Mammary epithelial cell (primary cell): ENCODE measurements at regions of chr2 and their contacts with region 1.

Region 1: GRCh38 chr2:9333591-9334171 is 89.6 kb downstream of the ITGB1BP1 start:
- DNase-seq: peak; percentile 71
- H3K4me3 ChIP-seq: no peak overlapping the region
- H3K27ac ChIP-seq: no peak overlapping the region
- H3K4me1 ChIP-seq: peaks cover 13% of the 10 kb centered on the region
- H3K27me3 ChIP-seq: no peaks in the 10 kb centered on the region
- CTCF ChIP-seq: peak; percentile 75 to 85

Region 2: DNA sequence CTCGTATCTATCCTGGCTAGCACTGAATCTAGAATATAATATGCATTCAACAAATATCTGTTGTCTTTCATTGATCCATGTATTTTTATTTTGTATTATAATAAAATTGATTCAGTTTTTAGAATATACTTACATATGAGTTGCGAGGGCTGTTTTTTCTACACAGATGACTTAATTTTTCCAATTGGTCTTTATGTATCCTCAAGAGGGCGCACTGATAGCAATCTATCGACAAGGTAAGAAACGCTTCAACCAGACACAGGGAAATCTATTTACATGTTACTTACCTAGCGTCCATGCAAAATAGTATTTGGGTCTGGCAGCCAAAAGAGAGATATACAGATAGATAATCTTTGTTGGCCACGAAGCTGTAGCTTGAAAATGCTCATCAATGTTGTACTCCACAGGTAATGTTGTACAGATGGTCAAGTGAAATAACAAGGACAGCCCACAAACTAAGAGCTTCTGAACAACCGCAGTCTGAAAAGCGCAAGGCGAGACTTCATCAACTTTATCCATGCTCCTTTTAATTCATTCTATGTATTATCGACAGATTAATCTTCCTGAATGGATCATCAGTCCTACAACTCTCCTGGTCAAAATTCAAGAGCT is 460.8 kb before region 1 on chr2:
- CTCF ChIA-PET with region 1: no interaction called
- dilution Hi-C with region 1: no loop called
- in situ Hi-C with region 1: loop called in 1 of 2 experiments (anchors 25 kb)
- intact Hi-C with region 1: loop called (anchors 5 kb)
- DNase-seq: peak; percentile 37
- H3K4me3 ChIP-seq: no peak overlapping the region
- H3K27ac ChIP-seq: no peak overlapping the region
- H3K4me1 ChIP-seq: no peaks in the 10 kb centered on the region
- H3K27me3 ChIP-seq: no peaks in the 10 kb centered on the region
- CTCF ChIP-seq: peak; percentile 44 to 65

Region 3: GRCh38 chr2:9310377-9310776 is 23.3 kb before region 1 on chr2:
- CTCF ChIA-PET with region 1: interaction called, 37 read pairs
- dilution Hi-C with region 1: no loop called
- in situ Hi-C with region 1: no loop called
- intact Hi-C with region 1: no loop called
- DNase-seq: peak; percentile 93
- H3K4me3 ChIP-seq: no peak overlapping the region
- H3K27ac ChIP-seq: peak overlapping the region; percentile 95
- H3K4me1 ChIP-seq: peaks cover 69% of the 10 kb centered on the region
- H3K27me3 ChIP-seq: no peaks in the 10 kb centered on the region
- CTCF ChIP-seq: no peak